ENCODE measurements at regions of chr9 and their contacts with region 1.

Region 1: GRCh38 chr9:128006360-128007034 is 25.7 kb upstream of the EEIG1 start:
- DNase-seq: no peak
- H3K4me3 ChIP-seq: no peak overlapping the region
- H3K4me3 Mint-ChIP-seq: no peak overlapping the region
- H3K27ac Mint-ChIP-seq: no peak overlapping the region
- H3K4me1 ChIP-seq: peaks cover 6% of the 10 kb centered on the region
- H3K4me1 Mint-ChIP-seq: no peaks in the 10 kb centered on the region
- H3K27me3 ChIP-seq: no peaks in the 10 kb centered on the region
- H3K27me3 Mint-ChIP-seq: no peaks in the 10 kb centered on the region
- CTCF ChIP-seq: no peak

Region 2: GRCh38 chr9:127991042-127991756 is 15.3 kb before region 1 on chr9:
- CTCF ChIA-PET with region 1: no interaction called
- POLR2A ChIA-PET with region 1: interaction called, 12 read pairs
- intact Hi-C with region 1: no loop called
- DNase-seq: peak; percentile 27 to 70
- H3K4me3 ChIP-seq: no peak overlapping the region
- H3K4me3 Mint-ChIP-seq: no peak overlapping the region
- H3K27ac Mint-ChIP-seq: no peak overlapping the region
- H3K4me1 ChIP-seq: peaks cover 7% of the 10 kb centered on the region
- H3K4me1 Mint-ChIP-seq: peaks cover 7% of the 10 kb centered on the region
- H3K27me3 ChIP-seq: no peaks in the 10 kb centered on the region
- H3K27me3 Mint-ChIP-seq: no peaks in the 10 kb centered on the region
- CTCF ChIP-seq: no peak

Region 3: GRCh38 chr9:128150594-128151308 is 144.3 kb after region 1 on chr9:
- CTCF ChIA-PET with region 1: no interaction called
- POLR2A ChIA-PET with region 1: no interaction called
- intact Hi-C with region 1: no loop called
- DNase-seq: peak; percentile 31 to 43
- H3K4me3 ChIP-seq: no peak overlapping the region
- H3K4me3 Mint-ChIP-seq: no peak overlapping the region
- H3K27ac Mint-ChIP-seq: no peak overlapping the region
- H3K4me1 ChIP-seq: peaks cover 8% of the 10 kb centered on the region; the same call in 1 of the 2 replicates
- H3K4me1 Mint-ChIP-seq: no peaks in the 10 kb centered on the region
- H3K27me3 ChIP-seq: no peaks in the 10 kb centered on the region
- H3K27me3 Mint-ChIP-seq: no peaks in the 10 kb centered on the region
- CTCF ChIP-seq: peak; percentile 13 to 39

Measured in Caco-2 (cell line).